Activated CD4-positive, alpha-beta T cell treated with anti-CD3 and anti-CD28 coated beads, Interleukin-2, amount 10 ng/mL, durations not matched to agents 24 days and 14 days (primary cell): ENCODE measurements at regions of chr1 and their contacts with region 1.

Region 1: DNA sequence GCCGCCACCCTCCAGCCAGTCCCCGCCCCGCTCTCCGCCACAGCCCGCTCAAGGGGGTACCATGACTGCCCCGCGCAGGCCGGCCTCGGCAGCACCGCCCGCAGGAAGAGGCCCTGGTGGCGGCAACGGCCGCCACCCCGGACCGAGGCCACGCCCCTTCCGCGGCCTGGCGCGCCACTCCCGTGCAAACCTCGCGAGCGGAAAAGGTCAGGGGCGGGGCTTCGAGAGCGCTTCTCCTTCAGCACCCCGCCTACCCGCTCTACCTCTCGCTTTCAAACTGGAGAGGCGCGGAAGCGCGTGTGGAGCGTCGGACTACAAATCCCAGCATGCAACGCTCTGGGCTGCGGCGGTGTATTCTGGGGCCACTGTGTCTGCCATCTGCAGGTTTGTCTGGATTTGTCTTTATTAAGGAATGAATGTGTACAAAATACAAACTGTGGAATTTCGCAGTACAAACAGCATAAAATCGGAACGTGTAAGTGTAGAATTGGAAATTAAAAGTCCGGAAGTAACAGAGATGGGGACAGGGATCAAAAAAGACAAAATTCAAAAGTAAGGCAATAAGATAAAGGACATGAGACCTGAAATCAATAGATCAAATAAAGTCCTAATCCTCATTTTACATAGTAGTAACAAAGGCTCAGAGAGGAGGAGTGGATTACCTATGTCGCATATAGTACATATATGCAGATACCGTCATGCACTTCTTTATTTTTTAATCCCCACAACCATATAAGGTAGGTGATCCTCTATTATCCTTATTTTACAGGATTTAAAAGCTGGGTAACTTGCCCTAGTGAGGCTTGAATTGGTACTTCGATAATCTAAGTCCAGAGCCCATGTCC is 464 bp upstream of the ADSS2 start:
- DNase-seq: peak; percentile 100
- H3K4me3 Mint-ChIP-seq: peak overlapping the region; percentile 92
- H3K27ac Mint-ChIP-seq: peak overlapping the region; percentile 96
- H3K4me1 Mint-ChIP-seq: peaks cover 29% of the 10 kb centered on the region
- H3K27me3 Mint-ChIP-seq: no peaks in the 10 kb centered on the region

Region 2: DNA sequence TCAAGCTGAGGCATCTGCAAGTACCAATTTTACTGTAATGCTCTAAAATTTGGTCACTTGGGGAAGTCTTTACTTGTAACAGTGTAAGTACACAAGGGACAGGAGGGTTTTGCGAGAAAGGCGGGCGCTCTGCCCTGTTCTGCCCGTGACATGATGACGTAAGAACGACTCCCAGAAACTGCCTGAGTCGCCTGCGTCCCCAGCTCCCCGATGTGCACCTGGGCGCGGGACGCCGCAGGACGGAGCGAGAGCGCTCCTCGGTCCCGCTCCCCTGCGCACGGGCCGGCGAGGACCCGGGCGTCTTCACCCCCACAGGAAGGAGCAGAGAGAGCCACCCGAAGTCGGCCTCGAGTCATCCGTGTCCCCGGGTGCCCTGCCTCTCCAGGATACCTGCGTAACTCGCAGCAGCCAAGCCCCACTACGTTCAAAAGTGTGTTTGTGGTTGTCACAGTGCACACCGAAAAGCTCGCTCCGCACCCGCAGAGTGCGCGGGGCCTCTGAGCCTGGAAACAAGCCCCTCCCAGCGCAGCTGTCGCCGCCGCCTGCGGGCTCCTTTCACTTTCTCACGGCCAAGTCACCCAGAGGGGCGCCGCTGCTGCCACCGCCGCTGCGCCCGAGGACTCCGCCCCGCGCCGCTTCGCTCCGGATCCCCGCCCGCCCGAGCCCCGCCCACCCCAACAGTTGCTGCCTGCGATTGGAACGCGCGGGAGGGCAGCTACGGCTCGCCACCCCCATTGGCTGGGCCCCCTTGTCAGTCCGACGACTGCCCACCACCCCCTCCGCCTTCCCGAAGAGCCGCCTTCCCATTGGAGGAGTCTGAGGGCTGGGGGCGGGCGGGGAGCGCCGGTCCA is 404.3 kb before region 1 on chr1:
- intact Hi-C with region 1: loop called (anchors 2 kb)
- DNase-seq: peak; percentile 97
- H3K4me3 Mint-ChIP-seq: peak overlapping the region; percentile 97
- H3K27ac Mint-ChIP-seq: peak overlapping the region; percentile 95
- H3K4me1 Mint-ChIP-seq: peaks cover 28% of the 10 kb centered on the region
- H3K27me3 Mint-ChIP-seq: peaks cover 47% of the 10 kb centered on the region

Region 3: DNA sequence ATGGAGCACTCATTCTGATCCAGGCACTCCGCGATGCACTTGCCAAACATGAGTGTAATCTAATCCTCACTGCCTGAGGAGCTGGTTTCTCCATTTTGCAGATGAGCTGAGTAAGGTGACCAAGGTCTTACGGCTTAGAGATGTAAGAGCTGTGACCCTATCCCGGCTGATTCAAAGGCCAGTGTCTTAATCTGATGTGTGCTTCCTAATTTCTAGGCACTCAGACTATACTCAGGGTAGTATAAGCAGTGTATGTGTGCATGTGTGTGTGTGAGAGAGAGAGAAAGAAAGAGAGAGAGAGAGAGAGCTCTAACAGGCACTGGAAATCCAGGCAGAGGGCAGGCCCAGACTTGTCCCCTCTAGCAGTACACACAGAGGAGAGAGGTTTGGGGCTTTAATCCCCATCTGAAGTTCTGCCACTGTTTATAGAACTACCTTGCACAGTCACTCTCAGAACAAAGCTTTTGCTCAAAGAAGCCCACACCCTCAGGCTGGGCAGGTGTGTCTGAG is 212.9 kb before region 1 on chr1:
- intact Hi-C with region 1: no loop called
- DNase-seq: peak; percentile 64
- H3K4me3 Mint-ChIP-seq: no peak overlapping the region
- H3K27ac Mint-ChIP-seq: peak overlapping the region; percentile 51
- H3K4me1 Mint-ChIP-seq: peaks cover 7% of the 10 kb centered on the region
- H3K27me3 Mint-ChIP-seq: no peaks in the 10 kb centered on the region

Region 4: DNA sequence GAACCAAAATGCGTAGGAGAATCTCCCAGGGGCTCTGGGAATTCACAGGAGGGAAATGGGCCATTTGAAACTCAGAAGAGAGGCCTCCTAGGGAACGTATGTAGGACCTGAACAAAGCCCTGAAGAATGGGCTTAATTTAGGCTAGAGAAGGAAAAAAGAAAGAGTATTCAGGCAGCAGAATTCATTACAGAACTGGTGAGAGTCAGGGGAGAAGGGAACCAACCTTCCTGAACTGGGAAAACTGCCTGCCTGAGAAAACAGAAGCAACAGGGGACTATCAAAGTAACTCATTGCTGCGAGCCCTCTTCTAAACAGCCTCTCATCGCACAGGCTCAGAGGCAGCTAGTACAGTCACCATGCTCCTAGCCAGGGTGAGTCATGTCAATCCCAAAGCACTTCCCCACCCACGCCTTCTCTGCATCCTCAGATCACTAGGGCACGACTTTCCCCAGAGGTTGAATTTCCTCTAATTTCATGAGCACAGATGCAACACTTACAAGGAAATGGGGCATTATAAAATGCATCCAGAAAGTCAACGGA is 98.6 kb before region 1 on chr1:
- intact Hi-C with region 1: loop called (anchors 5 kb)
- DNase-seq: peak; percentile 70
- H3K4me3 Mint-ChIP-seq: no peak overlapping the region
- H3K27ac Mint-ChIP-seq: peak overlapping the region; percentile 73
- H3K4me1 Mint-ChIP-seq: peaks cover 24% of the 10 kb centered on the region
- H3K27me3 Mint-ChIP-seq: no peaks in the 10 kb centered on the region

Region 5: DNA sequence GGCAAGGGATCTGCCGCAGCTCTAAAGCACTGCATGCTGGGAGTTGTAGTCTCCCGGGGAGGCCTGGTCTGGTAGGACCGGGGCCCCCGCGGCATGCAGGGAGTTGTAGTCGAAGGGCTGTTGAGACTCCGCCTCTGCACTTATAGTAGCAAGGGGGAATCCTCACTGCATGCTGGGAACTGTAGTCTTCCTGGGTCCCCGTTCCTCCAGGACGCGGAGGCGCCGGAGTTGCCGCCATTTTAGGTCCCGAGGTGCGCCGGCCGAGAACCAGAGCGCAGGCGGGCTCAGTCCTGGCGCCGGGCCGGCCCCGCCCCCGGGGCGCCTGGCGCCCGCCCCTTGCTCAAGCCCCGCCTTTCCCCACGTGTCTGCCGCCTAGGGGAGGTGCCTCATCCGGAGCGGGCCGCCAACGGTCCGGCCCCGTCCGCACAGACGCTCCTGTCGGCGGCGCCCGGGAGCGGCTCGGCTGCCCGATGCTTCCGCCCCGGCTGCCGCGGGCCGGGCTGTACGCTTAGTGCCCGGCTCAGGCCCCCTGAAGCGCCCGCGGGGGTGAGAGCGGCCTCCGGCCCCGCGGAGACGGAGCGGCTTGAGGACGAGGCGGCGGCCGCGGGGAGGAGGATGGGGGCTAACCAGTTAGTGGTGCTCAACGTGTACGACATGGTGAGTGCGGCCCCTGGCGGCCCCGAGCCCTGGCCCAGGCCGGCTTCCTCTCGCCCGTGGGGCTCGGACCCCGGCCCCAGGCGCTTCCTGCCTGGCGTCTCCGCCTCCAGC is 200.7 kb after region 1 on chr1 and contains the start of gene DESI2:
- intact Hi-C with region 1: loop called (anchors 1 kb)
- DNase-seq: peak; percentile 99
- H3K4me3 Mint-ChIP-seq: peak within 1 kb of the TSS; percentile 82
- H3K27ac Mint-ChIP-seq: peak within 1 kb of the TSS; percentile 84
- H3K4me1 Mint-ChIP-seq: peaks cover 23% of the 10 kb centered on the region
- H3K27me3 Mint-ChIP-seq: no peaks in the 10 kb centered on the region
- total RNA-seq, gene DESI2: 32.3 and 33.1 TPM in 2 replicates

Region 6: GRCh38 chr1:244864253-244865027 is 412.3 kb after region 1 on chr1 and contains the start of gene HNRNPU:
- intact Hi-C with region 1: loop called (anchors 2 kb)
- DNase-seq: peak; percentile 99
- H3K4me3 Mint-ChIP-seq: peak within 1 kb of the TSS; percentile 98
- H3K27ac Mint-ChIP-seq: peak within 1 kb of the TSS; percentile 98
- H3K4me1 Mint-ChIP-seq: peaks cover 34% of the 10 kb centered on the region
- H3K27me3 Mint-ChIP-seq: no peaks in the 10 kb centered on the region
- total RNA-seq, gene HNRNPU: 611 and 612 TPM in 2 replicates